GM12878 (cell line): ENCODE measurements at regions of chr11 and their contacts with region 1.

Region 1: GRCh38 chr11:124800226-124800929 is at the start of gene MSANTD2:
- DNase-seq: no peak
- ATAC-seq: peak; percentile 95
- H3K4me3 ChIP-seq: peak within 1 kb of the TSS; percentile 84
- H3K27ac ChIP-seq: peak within 1 kb of the TSS; percentile 94
- H3K4me1 ChIP-seq: peaks cover 9% of the 10 kb centered on the region
- H3K27me3 ChIP-seq: peaks cover 0 to 1% of the 10 kb centered on the region in 2 experiments; a peak in 1 of 4 replicates
- CTCF ChIP-seq: no peak
- EP300 ChIP-seq: 0 out of 4 replicates have a peak, but pooled peaks of 1 of the 2 experiments have one; percentile 15
- POLR2A ChIP-seq: peak; percentile 98
- RAD21 ChIP-seq: no peak
- polyA plus RNA-seq, gene MSANTD2: 3.0 to 4.1 TPM

Region 2: GRCh38 chr11:124644426-124645280 is 155.7 kb before region 1 on chr11:
- CTCF ChIA-PET with region 1: interaction called, 52 read pairs
- POLR2A ChIA-PET with region 1: no interaction called
- RAD21 ChIA-PET with region 1: no interaction called
- SMC1A ChIA-PET with region 1: interaction called, 10 read pairs
- in situ Hi-C with region 1: no loop called
- intact Hi-C with region 1: no loop called
- DNase-seq: no peak
- ATAC-seq: peak; percentile 71
- H3K4me3 ChIP-seq: no peak overlapping the region
- H3K27ac ChIP-seq: no peak overlapping the region
- H3K4me1 ChIP-seq: no peaks in the 10 kb centered on the region; the same call in 1 of the 2 replicates
- H3K27me3 ChIP-seq: no peaks in the 10 kb centered on the region
- CTCF ChIP-seq: peak; percentile 72 to 89 (median 77)
- EP300 ChIP-seq: no peak
- POLR2A ChIP-seq: no peak
- RAD21 ChIP-seq: peak; percentile 77

Region 3: GRCh38 chr11:124724979-124725718 is 75.2 kb before region 1 on chr11:
- CTCF ChIA-PET with region 1: interaction called, 4 read pairs
- POLR2A ChIA-PET with region 1: no interaction called
- RAD21 ChIA-PET with region 1: no interaction called
- SMC1A ChIA-PET with region 1: interaction called, 10 read pairs
- in situ Hi-C with region 1: no loop called
- intact Hi-C with region 1: no loop called
- DNase-seq: peak; percentile 41
- ATAC-seq: peak; percentile 95
- H3K4me3 ChIP-seq: no peak overlapping the region
- H3K27ac ChIP-seq: no peak overlapping the region
- H3K4me1 ChIP-seq: peaks cover 7% of the 10 kb centered on the region
- H3K27me3 ChIP-seq: no peaks in the 10 kb centered on the region; a peak in 2 of 4 replicates
- CTCF ChIP-seq: no peak
- EP300 ChIP-seq: no peak
- POLR2A ChIP-seq: no peak
- RAD21 ChIP-seq: no peak

Region 4: DNA sequence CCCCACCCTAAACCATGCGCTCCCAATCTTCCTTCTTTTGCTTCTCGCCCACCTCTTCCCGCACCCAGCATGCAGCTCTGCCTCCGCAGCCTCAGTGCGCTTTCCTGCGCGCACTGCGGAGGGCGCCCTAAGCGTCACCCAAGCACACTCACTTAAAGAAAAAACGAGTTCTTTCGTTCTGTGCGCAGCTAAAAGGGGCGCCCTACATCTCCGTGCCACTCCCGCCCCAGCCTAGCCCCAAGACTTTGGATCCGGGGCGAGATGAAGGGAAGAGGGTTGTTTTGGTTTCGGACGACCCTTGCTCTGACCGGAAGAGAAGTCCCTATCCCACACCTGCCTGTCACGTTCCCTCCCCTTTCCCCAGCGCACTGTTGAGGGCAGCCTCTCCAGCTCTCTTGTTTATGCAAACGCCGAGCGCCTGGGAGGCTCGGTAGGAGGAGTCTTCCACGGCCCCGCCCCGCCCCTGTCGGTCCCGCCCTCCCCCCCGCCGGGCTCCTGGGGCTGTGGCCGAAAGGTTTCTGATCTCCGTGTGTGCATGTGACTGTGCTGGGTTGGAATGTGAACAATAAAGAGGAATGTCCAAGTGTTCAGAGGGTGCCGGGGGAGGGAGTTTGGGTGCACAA is 53.6 kb before region 1 on chr11:
- CTCF ChIA-PET with region 1: interaction called, 31 read pairs
- POLR2A ChIA-PET with region 1: interaction called, 3 read pairs
- RAD21 ChIA-PET with region 1: interaction called, 11 read pairs
- SMC1A ChIA-PET with region 1: interaction called, 8 read pairs
- in situ Hi-C with region 1: no loop called
- intact Hi-C with region 1: no loop called
- DNase-seq: peak; percentile 53
- ATAC-seq: peak; percentile 94
- H3K4me3 ChIP-seq: peak overlapping the region; percentile 88
- H3K27ac ChIP-seq: peak overlapping the region; percentile 53; the same call in 1 of the 2 replicates
- H3K4me1 ChIP-seq: peaks cover 4% of the 10 kb centered on the region; the same call in 1 of the 2 replicates
- H3K27me3 ChIP-seq: no peaks in the 10 kb centered on the region
- CTCF ChIP-seq: peak; percentile 66 to 79 (median 78)
- EP300 ChIP-seq: no peak
- POLR2A ChIP-seq: peak; percentile 70
- RAD21 ChIP-seq: peak; percentile 47

Region 5: GRCh38 chr11:124788521-124788920 is 11.9 kb before region 1 on chr11:
- CTCF ChIA-PET with region 1: interaction called, 16 read pairs
- POLR2A ChIA-PET with region 1: interaction called, 5 read pairs
- RAD21 ChIA-PET with region 1: no interaction called
- SMC1A ChIA-PET with region 1: interaction called, 5 read pairs
- in situ Hi-C with region 1: no loop called
- intact Hi-C with region 1: no loop called
- DNase-seq: no peak
- ATAC-seq: no peak
- H3K4me3 ChIP-seq: no peak overlapping the region
- H3K27ac ChIP-seq: no peak overlapping the region
- H3K4me1 ChIP-seq: peaks cover 12% of the 10 kb centered on the region
- H3K27me3 ChIP-seq: no peaks in the 10 kb centered on the region
- CTCF ChIP-seq: no peak
- EP300 ChIP-seq: no peak
- POLR2A ChIP-seq: no peak
- RAD21 ChIP-seq: no peak

Region 6: DNA sequence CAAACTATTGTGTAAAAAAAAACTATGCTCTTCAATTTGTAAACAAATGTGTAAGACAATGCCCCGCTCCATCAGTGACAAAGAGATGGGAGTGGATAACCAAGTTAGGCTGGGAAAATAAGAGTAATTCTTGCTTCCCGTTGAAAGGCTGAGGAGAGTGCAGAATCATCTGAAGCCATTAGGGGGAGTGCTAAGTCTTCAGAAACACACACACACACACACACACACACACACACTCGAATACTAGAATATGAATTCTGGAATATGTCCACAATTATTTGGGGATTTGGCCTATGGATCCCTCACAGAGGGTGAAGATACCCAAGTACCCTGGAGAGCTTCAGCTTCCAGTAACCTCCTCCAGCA is 37.1 kb after region 1 on chr11:
- CTCF ChIA-PET with region 1: interaction called, 21 read pairs
- POLR2A ChIA-PET with region 1: no interaction called
- RAD21 ChIA-PET with region 1: interaction called, 6 read pairs
- SMC1A ChIA-PET with region 1: interaction called, 5 read pairs
- in situ Hi-C with region 1: no loop called
- intact Hi-C with region 1: loop called (anchors 2 kb)
- DNase-seq: peak; percentile 2
- ATAC-seq: peak; percentile 67
- H3K4me3 ChIP-seq: no peak overlapping the region
- H3K27ac ChIP-seq: no peak overlapping the region
- H3K4me1 ChIP-seq: no peaks in the 10 kb centered on the region
- H3K27me3 ChIP-seq: peaks cover 16 to 17% of the 10 kb centered on the region in 2 experiments
- CTCF ChIP-seq: peak; percentile 41 to 60 (median 54)
- EP300 ChIP-seq: no peak
- POLR2A ChIP-seq: no peak
- RAD21 ChIP-seq: peak; percentile 46

Region 7: DNA sequence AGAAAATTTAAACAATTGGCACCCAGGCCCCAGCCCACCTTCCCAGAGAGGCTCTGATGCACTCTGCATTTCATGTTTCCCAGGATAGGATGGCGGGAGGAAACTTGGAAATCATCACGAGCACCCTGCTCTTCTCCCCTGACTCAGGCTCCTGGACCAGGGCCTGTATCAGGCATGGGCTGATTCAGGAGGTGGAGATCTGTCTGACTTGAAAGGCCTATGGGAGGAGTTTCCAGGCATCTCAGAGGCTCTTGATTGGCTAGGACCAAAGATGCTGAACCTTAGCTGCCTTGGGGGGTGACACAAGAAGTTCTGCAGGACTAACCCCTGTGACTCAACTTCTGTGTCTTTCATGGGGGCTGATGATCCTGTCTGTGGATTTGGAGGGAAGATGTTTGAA is 470.3 kb after region 1 on chr11:
- CTCF ChIA-PET with region 1: no interaction called
- POLR2A ChIA-PET with region 1: no interaction called
- RAD21 ChIA-PET with region 1: no interaction called
- SMC1A ChIA-PET with region 1: no interaction called
- in situ Hi-C with region 1: no loop called
- intact Hi-C with region 1: no loop called
- DNase-seq: no peak
- ATAC-seq: no peak
- H3K4me3 ChIP-seq: no peak overlapping the region
- H3K27ac ChIP-seq: no peak overlapping the region
- H3K4me1 ChIP-seq: no peaks in the 10 kb centered on the region
- H3K27me3 ChIP-seq: peaks cover 11 to 13% of the 10 kb centered on the region in 2 experiments; a peak in 3 of 4 replicates
- CTCF ChIP-seq: no peak
- EP300 ChIP-seq: no peak
- POLR2A ChIP-seq: no peak
- RAD21 ChIP-seq: no peak